A673 (cell line): ENCODE measurements at regions of chr6 and their contacts with region 1.

Region 1: GRCh38 chr6:83057705-83058321 is 7.8 kb downstream of the UBE3D start:
- DNase-seq: peak; percentile 80
- H3K4me3 ChIP-seq: no peak overlapping the region
- H3K27ac ChIP-seq: peak overlapping the region; percentile 44
- H3K4me1 ChIP-seq: peaks cover 74% of the 10 kb centered on the region
- H3K27me3 ChIP-seq: no peaks in the 10 kb centered on the region
- CTCF ChIP-seq: peak; percentile 92

Region 2: GRCh38 chr6:82080767-82081166 is 977.0 kb before region 1 on chr6:
- CTCF ChIA-PET with region 1: no interaction called
- POLR2A ChIA-PET with region 1: no interaction called
- intact Hi-C with region 1: loop called (anchors 10 kb)
- DNase-seq: no peak
- H3K4me3 ChIP-seq: no peak overlapping the region
- H3K27ac ChIP-seq: no peak overlapping the region
- H3K4me1 ChIP-seq: peaks cover 46% of the 10 kb centered on the region
- H3K27me3 ChIP-seq: no peaks in the 10 kb centered on the region
- CTCF ChIP-seq: no peak

Region 3: DNA sequence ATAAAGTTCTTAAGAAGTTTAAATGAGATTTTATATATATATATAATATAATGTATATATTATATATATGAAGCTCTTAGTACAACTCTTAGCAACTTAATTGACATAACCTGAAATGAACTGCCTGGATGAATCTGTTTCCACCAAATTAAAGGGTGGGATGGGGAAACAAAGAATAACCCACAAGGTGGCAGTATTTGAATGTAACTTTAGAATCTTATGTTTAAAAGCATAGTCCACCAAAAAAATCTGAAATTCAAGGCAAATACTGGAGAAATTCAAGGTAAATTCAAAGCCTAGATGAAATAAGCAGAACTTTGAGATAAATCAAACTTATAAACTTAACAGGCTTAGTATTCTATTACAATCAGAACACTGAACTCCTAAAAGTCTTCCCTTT is 805.9 kb before region 1 on chr6:
- CTCF ChIA-PET with region 1: no interaction called
- POLR2A ChIA-PET with region 1: no interaction called
- intact Hi-C with region 1: loop called (anchors 2 kb)
- DNase-seq: peak; percentile 79
- H3K4me3 ChIP-seq: no peak overlapping the region
- H3K27ac ChIP-seq: no peak overlapping the region
- H3K4me1 ChIP-seq: peaks cover 19% of the 10 kb centered on the region
- H3K27me3 ChIP-seq: no peaks in the 10 kb centered on the region
- CTCF ChIP-seq: peak; percentile 60

Region 4: GRCh38 chr6:82363351-82364086 is 694.3 kb before region 1 on chr6 and contains the start of gene TPBG:
- CTCF ChIA-PET with region 1: interaction called, 3 read pairs
- POLR2A ChIA-PET with region 1: no interaction called
- intact Hi-C with region 1: loop called (anchors 1 kb)
- DNase-seq: peak; percentile 86
- H3K4me3 ChIP-seq: peak within 1 kb of the TSS; percentile 83
- H3K27ac ChIP-seq: peak within 1 kb of the TSS; percentile 95
- H3K4me1 ChIP-seq: peaks cover 40% of the 10 kb centered on the region
- H3K27me3 ChIP-seq: no peaks in the 10 kb centered on the region
- CTCF ChIP-seq: peak; percentile 51
- total RNA-seq, gene TPBG: 66.4 and 67.1 TPM in 2 replicates

Region 5: GRCh38 chr6:82616386-82617028 is 441.3 kb before region 1 on chr6:
- CTCF ChIA-PET with region 1: no interaction called
- POLR2A ChIA-PET with region 1: no interaction called
- intact Hi-C with region 1: loop called (anchors 10 kb)
- DNase-seq: peak; percentile 93
- H3K4me3 ChIP-seq: peak overlapping the region; percentile 4
- H3K27ac ChIP-seq: peak overlapping the region; percentile 59
- H3K4me1 ChIP-seq: peaks cover 60% of the 10 kb centered on the region
- H3K27me3 ChIP-seq: no peaks in the 10 kb centered on the region
- CTCF ChIP-seq: peak; percentile 47; the same call in 1 of the 2 replicates

Region 6: GRCh38 chr6:82687855-82688254 is 370.0 kb before region 1 on chr6:
- CTCF ChIA-PET with region 1: interaction called, 4 read pairs
- POLR2A ChIA-PET with region 1: no interaction called
- intact Hi-C with region 1: loop called (anchors 1 kb)
- DNase-seq: peak; percentile 98
- H3K4me3 ChIP-seq: peak overlapping the region; percentile 20
- H3K27ac ChIP-seq: peak overlapping the region; percentile 96
- H3K4me1 ChIP-seq: peaks cover 65% of the 10 kb centered on the region
- H3K27me3 ChIP-seq: no peaks in the 10 kb centered on the region
- CTCF ChIP-seq: no peak

Region 7: DNA sequence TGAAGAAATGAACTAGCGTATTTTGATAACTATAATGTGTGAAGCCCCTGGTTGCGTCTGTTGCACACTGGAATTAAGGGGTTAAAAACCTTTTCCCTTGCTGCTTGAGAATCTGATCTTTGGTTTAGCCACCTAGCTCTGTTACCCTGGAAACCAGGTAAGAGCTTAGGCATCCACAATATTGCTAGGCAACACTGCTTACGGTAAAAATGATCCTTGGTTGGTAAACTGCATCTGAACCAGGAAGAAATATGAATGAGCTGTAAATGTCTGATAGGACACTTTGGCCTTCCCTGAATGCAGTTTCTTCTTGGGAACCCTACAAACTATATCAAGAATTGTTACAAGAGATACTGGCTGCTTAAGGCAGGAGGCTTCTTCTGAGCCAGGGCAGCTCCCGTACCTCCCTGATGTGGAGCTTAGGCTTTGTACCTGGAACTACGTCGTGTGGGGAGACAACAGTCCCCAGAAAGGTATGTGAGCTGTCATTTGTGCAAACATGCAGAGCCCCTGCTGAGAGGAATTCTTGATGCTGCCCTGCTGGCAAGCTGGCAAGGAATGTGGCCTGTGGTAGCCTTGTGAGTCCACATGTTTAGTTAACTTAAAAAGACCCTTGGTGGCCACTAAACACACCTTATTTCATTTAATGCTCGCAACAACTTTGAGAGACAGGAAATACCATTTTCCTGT is 10.6 kb before region 1 on chr6:
- CTCF ChIA-PET with region 1: no interaction called
- POLR2A ChIA-PET with region 1: no interaction called
- intact Hi-C with region 1: no loop called
- DNase-seq: no peak
- H3K4me3 ChIP-seq: no peak overlapping the region
- H3K27ac ChIP-seq: no peak overlapping the region
- H3K4me1 ChIP-seq: peaks cover 34% of the 10 kb centered on the region
- H3K27me3 ChIP-seq: no peaks in the 10 kb centered on the region
- CTCF ChIP-seq: no peak

Region 8: GRCh38 chr6:83160167-83160566 is 102.4 kb after region 1 on chr6:
- CTCF ChIA-PET with region 1: no interaction called
- POLR2A ChIA-PET with region 1: no interaction called
- intact Hi-C with region 1: no loop called
- DNase-seq: no peak
- H3K4me3 ChIP-seq: no peak overlapping the region
- H3K27ac ChIP-seq: no peak overlapping the region
- H3K4me1 ChIP-seq: no peaks in the 10 kb centered on the region
- H3K27me3 ChIP-seq: no peaks in the 10 kb centered on the region
- CTCF ChIP-seq: no peak

Region 9: GRCh38 chr6:83962582-83962981 is 904.8 kb after region 1 on chr6:
- CTCF ChIA-PET with region 1: no interaction called
- POLR2A ChIA-PET with region 1: no interaction called
- intact Hi-C with region 1: no loop called
- DNase-seq: no peak
- H3K4me3 ChIP-seq: no peak overlapping the region
- H3K27ac ChIP-seq: no peak overlapping the region
- H3K4me1 ChIP-seq: no peaks in the 10 kb centered on the region
- H3K27me3 ChIP-seq: no peaks in the 10 kb centered on the region
- CTCF ChIP-seq: no peak